Calu3 (cell line): ENCODE measurements at regions of chr9 and their contacts with region 1.

Region 1: GRCh38 chr9:109320742-109321448 is at the start of gene EPB41L4B:
- DNase-seq: peak; percentile 95
- H3K4me3 Mint-ChIP-seq: peak within 1 kb of the TSS; percentile 80
- H3K27ac Mint-ChIP-seq: peak within 1 kb of the TSS; percentile 80
- H3K4me1 Mint-ChIP-seq: peaks cover 27% of the 10 kb centered on the region
- H3K27me3 Mint-ChIP-seq: no peaks in the 10 kb centered on the region
- CTCF ChIP-seq: peak; percentile 80
- total RNA-seq, gene EPB41L4B: 4.6 and 5.8 TPM in 2 replicates

Region 2: GRCh38 chr9:109035684-109036423 is 285.0 kb before region 1 on chr9:
- CTCF ChIA-PET with region 1: no interaction called
- intact Hi-C with region 1: loop called (anchors 10 kb)
- DNase-seq: peak; percentile 38
- H3K4me3 Mint-ChIP-seq: no peak overlapping the region
- H3K27ac Mint-ChIP-seq: no peak overlapping the region
- H3K4me1 Mint-ChIP-seq: peaks cover 35% of the 10 kb centered on the region
- H3K27me3 Mint-ChIP-seq: no peaks in the 10 kb centered on the region
- CTCF ChIP-seq: no peak

Region 3: DNA sequence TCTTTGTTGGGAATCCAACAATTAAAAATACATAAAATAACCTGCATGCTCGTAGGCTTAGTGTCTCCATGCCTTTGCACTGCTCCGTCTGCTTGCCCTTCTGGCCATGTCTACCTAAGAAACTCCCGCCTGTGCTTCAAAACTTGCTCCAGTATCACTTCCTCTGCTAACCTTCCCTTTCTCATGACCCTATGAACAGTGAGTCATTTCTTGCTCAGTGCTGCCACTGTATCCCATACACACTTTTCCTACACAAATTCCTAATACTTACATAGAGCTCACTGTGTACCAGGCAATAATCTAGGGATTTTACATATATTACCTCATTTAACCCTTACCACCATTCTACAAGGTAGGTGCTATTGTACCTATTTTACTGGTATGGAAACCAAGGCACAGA is 234.7 kb before region 1 on chr9:
- CTCF ChIA-PET with region 1: no interaction called
- intact Hi-C with region 1: no loop called
- DNase-seq: no peak
- H3K4me3 Mint-ChIP-seq: no peak overlapping the region
- H3K27ac Mint-ChIP-seq: no peak overlapping the region
- H3K4me1 Mint-ChIP-seq: peaks cover 14% of the 10 kb centered on the region
- H3K27me3 Mint-ChIP-seq: no peaks in the 10 kb centered on the region
- CTCF ChIP-seq: no peak

Region 4: DNA sequence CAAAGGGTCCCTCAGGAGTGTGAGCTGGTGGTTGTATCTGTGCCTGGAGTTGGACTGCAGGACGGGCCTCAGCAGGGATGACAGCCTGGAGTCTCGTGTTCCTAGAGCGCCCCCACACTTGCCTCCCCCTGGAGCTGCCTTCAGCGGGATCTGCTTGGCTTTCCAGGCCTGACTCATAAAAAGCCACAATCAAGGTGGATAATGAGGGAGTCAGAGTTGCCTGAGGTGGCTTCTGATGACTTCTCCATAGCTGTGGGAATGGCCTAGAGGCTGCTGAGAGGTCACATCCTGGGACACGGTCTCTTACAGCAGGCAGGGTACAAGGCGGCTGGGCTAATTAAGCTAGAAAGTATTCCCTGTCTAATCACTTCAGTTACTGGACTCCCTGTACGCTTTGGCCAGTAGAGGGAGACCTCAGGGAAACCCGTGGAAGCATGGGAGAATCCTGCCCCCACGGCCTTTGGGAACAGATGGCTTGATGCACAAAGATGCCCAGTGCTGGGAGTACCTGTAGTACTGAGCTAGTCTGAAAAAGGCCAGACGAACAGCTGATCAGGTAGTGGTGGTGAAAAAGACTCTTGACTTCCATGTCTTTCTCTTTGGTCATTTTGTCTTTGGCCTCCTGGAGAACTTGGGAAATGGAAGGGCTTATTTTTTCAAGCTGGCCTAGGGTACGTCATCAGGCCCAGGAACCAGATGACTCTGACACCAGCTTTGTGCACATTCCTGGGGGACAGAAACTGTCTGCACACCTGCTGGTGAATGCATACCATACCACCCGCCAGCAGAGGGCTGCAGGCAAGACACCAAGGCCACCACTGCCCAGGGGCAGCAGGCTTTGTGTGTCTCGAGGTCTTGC is 137.7 kb before region 1 on chr9:
- CTCF ChIA-PET with region 1: interaction called, 6 read pairs
- intact Hi-C with region 1: loop called (anchors 10 kb)
- DNase-seq: peak; percentile 61
- H3K4me3 Mint-ChIP-seq: no peak overlapping the region
- H3K27ac Mint-ChIP-seq: no peak overlapping the region
- H3K4me1 Mint-ChIP-seq: no peaks in the 10 kb centered on the region
- H3K27me3 Mint-ChIP-seq: peaks cover 13% of the 10 kb centered on the region
- CTCF ChIP-seq: peak; percentile 54

Region 5: DNA sequence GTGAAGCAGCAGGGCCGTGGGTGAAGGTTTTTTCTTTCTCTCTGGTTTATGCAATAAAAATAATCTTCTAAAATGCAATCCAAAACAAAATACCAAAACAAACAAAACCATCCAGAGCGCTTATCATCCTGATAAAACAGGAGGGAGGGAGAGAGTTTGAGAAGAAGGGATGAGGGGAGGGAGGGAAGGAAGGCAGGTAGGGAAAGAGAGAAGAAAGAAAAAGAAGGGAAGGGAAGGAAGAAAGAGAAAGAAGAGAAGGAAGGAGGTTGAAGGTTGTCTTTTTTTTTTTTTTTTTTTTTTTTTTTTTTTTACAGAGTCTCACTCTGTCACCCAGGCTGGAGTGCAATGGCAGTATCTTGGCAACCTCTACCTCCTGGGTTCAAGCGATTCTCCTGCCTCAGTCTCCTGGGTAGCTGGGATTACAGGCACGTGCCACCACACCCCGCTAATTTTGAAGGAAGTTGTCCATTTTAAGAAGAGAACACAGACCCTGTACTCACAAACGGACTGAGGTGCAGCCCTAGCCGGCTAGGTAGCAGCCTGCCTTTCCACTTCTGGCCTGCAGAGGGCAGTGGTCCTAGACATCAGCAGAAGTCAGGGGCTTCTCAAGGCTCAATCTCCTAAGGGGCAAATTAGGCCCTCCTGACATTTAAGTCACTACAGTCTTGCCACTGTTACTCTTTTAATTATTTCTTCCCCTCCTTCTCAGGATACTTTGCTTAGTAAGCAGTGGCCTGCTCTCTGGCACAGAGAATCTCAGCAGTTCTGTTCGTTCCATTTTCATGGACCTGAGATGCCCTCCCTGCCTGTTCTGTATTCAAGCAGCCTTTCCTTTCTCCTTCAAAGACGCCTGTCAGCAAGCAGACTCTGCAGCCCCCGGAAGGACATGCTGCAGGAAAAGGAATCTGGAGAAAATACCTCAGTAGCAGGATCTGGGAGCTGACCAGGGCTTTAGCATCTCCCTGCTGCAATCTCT is 76.5 kb before region 1 on chr9:
- CTCF ChIA-PET with region 1: no interaction called
- intact Hi-C with region 1: loop called (anchors 1 kb)
- DNase-seq: peak; percentile 66
- H3K4me3 Mint-ChIP-seq: no peak overlapping the region
- H3K27ac Mint-ChIP-seq: no peak overlapping the region
- H3K4me1 Mint-ChIP-seq: no peaks in the 10 kb centered on the region
- H3K27me3 Mint-ChIP-seq: no peaks in the 10 kb centered on the region
- CTCF ChIP-seq: peak; percentile 86

Region 6: DNA sequence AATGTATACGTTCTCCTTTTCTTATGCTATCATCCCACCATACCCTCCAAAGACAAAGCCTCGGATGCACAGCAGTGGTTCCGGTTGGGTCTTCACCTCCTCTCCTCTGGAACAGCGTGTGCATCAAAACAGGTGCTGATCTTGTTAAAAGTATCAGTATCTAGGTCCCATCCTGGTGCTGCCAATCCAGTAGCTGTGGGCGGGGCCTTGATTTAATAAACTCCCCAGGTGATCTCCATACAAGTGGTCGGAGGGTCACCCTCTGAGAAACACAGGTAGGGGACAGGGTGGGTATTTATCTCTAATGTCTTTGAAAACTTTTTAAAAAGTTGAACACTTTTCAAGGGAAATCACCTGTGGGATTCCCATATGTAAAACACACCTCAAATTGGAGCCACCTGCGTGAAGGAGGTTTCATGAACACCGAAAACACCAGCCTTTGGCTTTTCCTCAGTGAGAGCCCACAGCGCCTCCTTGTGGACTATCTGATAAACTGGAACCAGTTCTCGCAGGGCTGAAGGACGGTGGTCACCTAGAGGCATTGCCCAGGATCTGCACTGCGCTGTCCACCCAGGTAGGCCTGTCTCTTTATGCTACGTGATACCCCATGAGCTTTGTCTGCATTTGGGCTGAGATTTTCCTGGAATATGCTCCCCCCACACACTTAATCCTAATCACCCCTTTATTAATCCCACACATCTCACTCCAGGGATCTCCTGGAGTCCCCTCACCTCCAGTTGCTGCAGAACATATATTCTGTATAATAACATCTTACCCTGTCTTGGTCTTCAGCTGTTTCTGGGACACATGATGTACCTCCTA is 80.5 kb after region 1 on chr9:
- CTCF ChIA-PET with region 1: no interaction called
- intact Hi-C with region 1: loop called (anchors 10 kb)
- DNase-seq: peak; percentile 61
- H3K4me3 Mint-ChIP-seq: no peak overlapping the region
- H3K27ac Mint-ChIP-seq: peak overlapping the region; percentile 67
- H3K4me1 Mint-ChIP-seq: no peaks in the 10 kb centered on the region
- H3K27me3 Mint-ChIP-seq: no peaks in the 10 kb centered on the region
- CTCF ChIP-seq: peak; percentile 66

Region 7: DNA sequence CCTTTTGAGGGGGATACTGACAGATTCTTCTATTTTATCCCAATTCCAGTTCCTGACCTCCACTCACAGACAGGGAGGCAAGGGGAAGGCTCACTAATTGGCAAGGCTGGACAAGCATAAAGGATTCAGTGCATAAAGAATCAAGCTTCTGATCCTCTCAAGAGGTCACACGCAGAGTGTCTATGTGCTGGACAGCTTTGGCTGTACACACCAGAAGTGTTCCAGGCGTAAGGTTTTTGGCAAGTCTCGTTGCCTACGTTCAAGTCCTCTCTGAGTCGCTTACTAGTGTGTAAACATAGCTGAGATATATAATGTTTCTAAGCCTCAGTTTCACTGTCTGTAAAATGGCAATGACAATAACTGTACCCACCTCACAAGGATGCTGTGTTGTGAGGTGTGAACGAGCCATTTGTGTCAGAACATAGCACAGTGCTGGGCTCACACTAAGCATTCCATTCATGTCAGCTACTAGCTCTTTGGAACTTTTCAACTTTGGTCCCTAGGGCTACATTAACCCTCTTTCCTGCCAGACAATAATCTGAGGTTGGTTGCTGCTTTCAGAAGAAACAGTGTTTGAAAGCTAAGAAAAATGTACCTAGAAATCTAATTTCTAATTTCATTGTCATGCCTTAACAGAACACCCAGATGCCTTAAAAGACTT is 511.2 kb after region 1 on chr9:
- CTCF ChIA-PET with region 1: no interaction called
- intact Hi-C with region 1: no loop called
- DNase-seq: no peak
- H3K4me3 Mint-ChIP-seq: no peak overlapping the region
- H3K27ac Mint-ChIP-seq: no peak overlapping the region
- H3K4me1 Mint-ChIP-seq: peaks cover 9% of the 10 kb centered on the region
- H3K27me3 Mint-ChIP-seq: peaks cover 25% of the 10 kb centered on the region
- CTCF ChIP-seq: no peak

Region 8: GRCh38 chr9:110340314-110340713 is 1019.4 kb after region 1 on chr9:
- CTCF ChIA-PET with region 1: no interaction called
- intact Hi-C with region 1: no loop called
- DNase-seq: peak; percentile 2
- H3K4me3 Mint-ChIP-seq: no peak overlapping the region
- H3K27ac Mint-ChIP-seq: no peak overlapping the region
- H3K4me1 Mint-ChIP-seq: no peaks in the 10 kb centered on the region
- H3K27me3 Mint-ChIP-seq: no peaks in the 10 kb centered on the region
- CTCF ChIP-seq: no peak